ENCODE measurements at regions of chr18 and their contacts with region 1.

Region 1: DNA sequence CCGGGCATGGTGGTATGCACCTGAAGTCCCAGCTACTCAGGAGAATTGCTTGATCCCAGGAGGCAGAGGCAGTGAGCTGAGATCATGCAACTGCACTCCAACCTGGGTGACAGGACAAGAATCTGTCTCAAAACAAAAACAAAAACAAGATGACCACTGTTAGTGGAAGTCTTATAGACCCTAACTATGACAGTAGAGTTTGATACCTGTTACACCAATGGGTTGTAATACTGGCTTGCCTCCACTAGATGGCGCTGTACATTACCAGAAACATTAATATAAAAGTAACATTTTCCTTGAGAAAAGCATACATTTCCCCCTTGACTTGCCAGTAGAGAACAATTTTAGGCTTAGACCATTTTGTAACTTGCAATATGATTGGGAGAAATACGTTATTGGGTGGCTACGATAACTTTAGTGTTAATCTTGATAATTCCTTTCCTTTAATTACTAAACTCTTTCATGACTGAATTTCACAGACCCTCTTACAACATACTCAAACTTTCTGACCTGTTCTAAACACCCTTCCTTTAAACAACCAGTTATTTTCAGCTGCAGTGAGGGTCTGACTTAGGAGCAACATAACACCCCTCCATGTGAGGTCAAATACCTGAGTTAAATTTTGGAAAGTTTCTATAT is 19.5 kb downstream of the SLC25A52 start:
- DNase-seq: no peak

Region 2: GRCh38 chr18:31819106-31819924 is 78.1 kb after region 1 on chr18:
- intact Hi-C with region 1: loop called (anchors 2 kb)
- DNase-seq: no peak

Region 3: GRCh38 chr18:31835528-31836133 is 94.4 kb after region 1 on chr18:
- intact Hi-C with region 1: no loop called
- DNase-seq: no peak

Region 4: DNA sequence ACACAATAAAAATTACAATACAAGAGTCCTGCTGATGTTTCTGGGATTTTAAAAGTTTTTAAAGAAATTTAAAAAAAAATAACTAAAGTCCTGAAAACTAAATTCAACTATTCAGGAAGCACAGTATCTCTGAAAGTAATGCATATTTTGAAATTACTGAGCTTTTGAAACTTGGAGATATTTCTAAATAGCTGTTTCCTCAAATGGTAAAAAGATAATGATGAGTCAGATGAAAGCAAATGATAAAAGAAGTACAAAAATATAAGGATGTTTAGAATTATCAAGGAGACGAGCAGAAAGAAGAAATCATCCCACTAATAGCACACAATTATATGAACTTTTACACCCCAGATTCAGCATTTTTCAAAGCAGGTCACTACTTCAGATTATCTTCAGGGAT is 109.6 kb after region 1 on chr18:
- intact Hi-C with region 1: no loop called
- DNase-seq: no peak

Region 5: GRCh38 chr18:31977270-31977872 is 236.2 kb after region 1 on chr18:
- intact Hi-C with region 1: loop called (anchors 10 kb)
- DNase-seq: no peak